A549 (cell line): ENCODE measurements at regions of chr16 and their contacts with region 1.

Region 1: DNA sequence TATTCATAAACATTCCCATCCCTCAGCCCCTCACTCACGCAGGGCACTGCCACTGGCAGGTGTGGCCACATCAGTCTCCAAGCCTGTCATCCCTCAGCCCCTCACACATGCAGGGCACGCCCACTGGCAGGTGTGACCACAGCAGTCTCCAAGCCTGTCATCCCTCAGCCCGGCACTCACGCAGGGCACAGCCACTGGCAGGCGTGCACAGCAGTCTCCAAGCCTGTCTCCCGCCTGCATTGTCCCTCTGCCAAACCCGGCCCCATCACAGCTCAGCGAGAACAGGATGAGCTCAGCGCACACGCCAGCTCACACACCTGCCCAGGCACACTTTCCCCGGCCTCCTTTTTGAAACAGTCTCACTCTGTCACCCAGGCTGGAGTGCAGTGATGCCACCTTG is 11.4 kb upstream of the KREMEN2 start:
- DNase-seq: no peak
- ATAC-seq: no peak
- H3K4me3 ChIP-seq: no peak overlapping the region
- H3K27ac ChIP-seq: no peak overlapping the region
- H3K4me1 ChIP-seq: peaks cover 11% of the 10 kb centered on the region
- CTCF ChIP-seq: no peak
- EP300 ChIP-seq: no peak
- POLR2A ChIP-seq: no peak
- RAD21 ChIP-seq: no peak

Region 2: DNA sequence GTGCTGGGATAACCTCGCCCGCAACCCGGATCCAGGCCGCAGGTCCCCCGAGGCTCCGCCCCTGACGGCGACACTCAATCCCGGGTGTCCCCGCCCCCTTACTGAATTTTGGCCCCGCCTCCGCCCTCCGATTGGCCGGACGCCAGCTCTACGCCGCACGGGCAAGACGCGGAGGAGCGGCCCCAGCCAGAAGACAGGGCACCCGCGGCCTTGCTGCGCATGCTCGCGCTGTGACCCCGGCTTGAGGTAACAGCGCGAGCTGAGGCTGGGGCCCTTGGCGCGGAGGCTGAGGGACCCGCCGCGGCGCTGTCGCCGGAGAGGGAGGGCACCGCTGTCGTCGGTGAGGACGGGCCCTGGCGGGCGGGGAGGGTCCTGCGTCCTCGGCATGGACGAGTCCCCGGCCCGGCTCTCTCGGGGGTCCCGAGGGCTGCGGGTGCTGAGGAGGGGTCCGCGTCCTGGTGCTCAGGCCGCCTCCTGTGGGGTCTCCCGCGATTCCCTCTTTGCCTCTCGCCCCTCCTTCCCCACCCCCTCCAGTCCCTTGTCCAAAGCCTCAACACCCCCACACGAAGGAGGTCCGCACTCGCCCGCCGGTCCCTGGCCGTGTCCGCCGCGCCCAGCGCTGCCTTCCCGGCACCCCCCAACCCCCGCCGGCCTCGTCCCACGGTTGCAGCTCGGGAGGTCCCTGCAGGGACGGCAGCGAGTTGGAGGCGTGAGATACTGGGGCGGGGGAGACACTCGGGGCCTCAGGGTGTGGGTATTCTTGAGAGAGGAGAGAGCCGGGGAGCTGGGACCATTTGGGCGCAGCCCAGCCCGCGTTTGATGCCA is 69.4 kb before region 1 on chr16 and contains the start of gene FLYWCH2:
- CTCF ChIA-PET with region 1: no interaction called
- POLR2A ChIA-PET with region 1: no interaction called
- DNase-seq: peak; percentile 83 to 97
- ATAC-seq: peak; percentile 80 to 86
- H3K4me3 ChIP-seq: peak within 1 kb of the TSS; percentile 94
- H3K27ac ChIP-seq: peak within 1 kb of the TSS; percentile 96 to 97
- H3K4me1 ChIP-seq: peaks cover 5% of the 10 kb centered on the region; the same call in 2 of the 3 replicates
- CTCF ChIP-seq: no peak
- EP300 ChIP-seq: no peak
- POLR2A ChIP-seq: peak; percentile 87
- RAD21 ChIP-seq: no peak
- polyA plus RNA-seq, gene FLYWCH2: 22.7 and 23.2 TPM in 2 replicates

Region 3: GRCh38 chr16:2919511-2920255 is 33.0 kb before region 1 on chr16:
- CTCF ChIA-PET with region 1: interaction called, 190 read pairs
- POLR2A ChIA-PET with region 1: no interaction called
- DNase-seq: peak; percentile 61 to 73
- ATAC-seq: peak; percentile 69 to 71; a peak in 5 of 6 replicates
- H3K4me3 ChIP-seq: no peak overlapping the region
- H3K27ac ChIP-seq: no peak overlapping the region
- H3K4me1 ChIP-seq: peaks cover 13% of the 10 kb centered on the region
- CTCF ChIP-seq: peak; percentile 88
- EP300 ChIP-seq: no peak
- POLR2A ChIP-seq: no peak
- RAD21 ChIP-seq: peak; percentile 81

Region 4: DNA sequence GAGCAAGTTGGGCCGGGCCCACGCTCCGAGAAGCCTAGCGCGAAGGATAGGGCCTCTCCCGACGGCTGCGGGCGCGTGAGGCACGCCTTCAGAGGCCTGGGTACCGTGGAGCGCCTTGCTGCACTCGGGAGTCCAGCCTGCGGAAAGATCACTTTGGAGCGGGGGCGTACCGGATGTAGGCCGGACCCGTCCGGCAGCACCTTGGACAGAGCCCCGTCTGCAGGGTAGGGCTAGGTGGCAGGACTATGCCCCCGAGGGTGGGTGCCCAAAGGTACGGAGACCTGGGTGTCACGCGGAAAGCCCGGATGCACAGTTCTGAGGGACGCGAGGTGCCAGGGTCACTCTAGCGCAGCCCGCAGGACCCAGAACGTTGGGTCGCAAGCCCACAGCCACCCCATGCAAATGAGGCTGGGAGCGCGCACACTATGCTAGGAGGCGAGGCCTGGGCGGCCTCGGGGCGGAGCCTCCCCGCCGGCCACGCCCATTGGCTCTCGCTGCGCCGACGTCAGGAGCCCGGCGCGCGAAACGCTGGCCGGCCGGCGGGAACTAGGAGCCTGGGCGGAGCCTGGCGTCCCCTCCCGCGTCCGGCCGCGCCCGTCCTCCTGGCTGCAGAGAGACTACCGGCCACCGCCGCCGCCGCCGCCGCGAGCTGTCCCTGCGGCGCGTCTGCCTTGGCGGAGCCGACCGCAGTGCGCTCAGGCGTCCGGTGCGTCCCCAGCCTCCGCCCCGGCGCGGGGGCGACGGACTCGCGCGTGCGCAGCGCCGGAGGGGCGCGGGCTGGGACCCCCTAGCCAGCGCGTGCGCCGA is 16.3 kb after region 1 on chr16 and contains the start of gene PAQR4:
- CTCF ChIA-PET with region 1: interaction called, 97 read pairs
- POLR2A ChIA-PET with region 1: no interaction called
- DNase-seq: peak; percentile 84 to 91
- ATAC-seq: peak; percentile 68 to 74
- H3K4me3 ChIP-seq: peak within 1 kb of the TSS; percentile 97
- H3K27ac ChIP-seq: peak within 1 kb of the TSS; percentile 84 to 91
- H3K4me1 ChIP-seq: peaks cover 17% of the 10 kb centered on the region
- CTCF ChIP-seq: no peak
- EP300 ChIP-seq: no peak
- POLR2A ChIP-seq: no peak; the same call in 1 of the 2 replicates
- RAD21 ChIP-seq: no peak
- polyA plus RNA-seq, gene PAQR4: 8.0 and 9.0 TPM in 2 replicates